Heart right ventricle (tissue), 16 donors: ENCODE measurements at regions of chrX and their contacts with region 1.

Region 1: DNA sequence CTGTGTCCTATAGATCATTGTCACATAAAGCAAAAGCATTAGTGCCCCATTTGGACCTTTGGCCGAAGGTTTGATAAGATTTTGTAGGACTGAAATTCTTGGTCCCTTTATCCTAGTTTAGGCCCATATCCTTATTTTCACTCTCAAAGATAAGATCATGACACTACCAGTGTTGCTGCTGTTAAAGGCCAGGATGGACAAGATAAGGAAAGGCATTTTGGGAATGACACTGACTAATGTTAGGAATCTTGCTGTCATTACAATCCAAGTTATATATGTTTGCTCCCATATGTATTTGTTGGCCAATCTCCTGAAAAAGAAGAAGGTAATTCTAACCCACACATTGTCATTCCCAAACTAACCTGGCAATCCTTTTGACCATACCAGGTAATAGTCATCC is 101.3 kb upstream of the VAMP7 start:
- DNase-seq: no peak
- ATAC-seq: no peak
- H3K4me3 ChIP-seq: no peak overlapping the region
- H3K27ac ChIP-seq: no peak overlapping the region
- H3K4me1 ChIP-seq: no peaks in the 10 kb centered on the region
- H3K27me3 ChIP-seq: no peaks in the 10 kb centered on the region
- CTCF ChIP-seq: no peak

Region 2: DNA sequence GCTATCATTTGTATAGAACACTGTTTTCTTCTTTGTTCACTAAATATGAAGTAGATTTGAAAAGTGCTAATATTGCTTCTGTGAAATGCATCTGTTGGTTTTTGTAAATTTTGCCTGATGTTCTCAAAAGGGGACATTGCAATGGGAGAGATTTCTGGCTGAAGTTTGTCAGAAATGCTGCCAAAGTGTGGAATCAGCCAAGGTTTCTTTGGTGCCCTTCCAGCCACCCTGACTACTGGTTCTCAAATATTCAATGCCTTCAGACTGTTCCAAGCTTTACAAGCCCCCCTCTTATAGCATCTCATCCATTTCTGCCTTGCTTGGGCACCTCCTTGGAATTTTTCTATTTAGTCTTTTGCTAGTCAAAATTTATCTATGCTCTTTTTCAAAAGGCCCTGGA is 106.5 kb before region 1 on chrX:
- intact Hi-C with region 1: no loop called
- DNase-seq: no peak
- ATAC-seq: no peak
- H3K4me3 ChIP-seq: no peak overlapping the region
- H3K27ac ChIP-seq: no peak overlapping the region
- H3K4me1 ChIP-seq: no peaks in the 10 kb centered on the region
- H3K27me3 ChIP-seq: no peaks in the 10 kb centered on the region
- CTCF ChIP-seq: no peak

Region 3: GRCh38 chrX:155718972-155719586 is 60.8 kb before region 1 on chrX:
- intact Hi-C with region 1: loop called in 1 of 10 experiments (anchors 10 kb)
- DNase-seq: peak in 1 of 2 donors; percentile 29
- ATAC-seq: peak in 7 of 8 donors; percentile 73 to 98 (median 85)
- H3K4me3 ChIP-seq: peak overlapping the region in 6 of 10 donors; percentile 3 to 46 (median 36)
- H3K27ac ChIP-seq: peak overlapping the region in 8 of 10 donors; percentile 2 to 81 (median 60)
- H3K4me1 ChIP-seq: peaks cover 0 to 8% (median 0%) of the 10 kb centered on the region in 9 donors
- H3K27me3 ChIP-seq: no peaks in the 10 kb centered on the region
- CTCF ChIP-seq: no peak

Region 4: DNA sequence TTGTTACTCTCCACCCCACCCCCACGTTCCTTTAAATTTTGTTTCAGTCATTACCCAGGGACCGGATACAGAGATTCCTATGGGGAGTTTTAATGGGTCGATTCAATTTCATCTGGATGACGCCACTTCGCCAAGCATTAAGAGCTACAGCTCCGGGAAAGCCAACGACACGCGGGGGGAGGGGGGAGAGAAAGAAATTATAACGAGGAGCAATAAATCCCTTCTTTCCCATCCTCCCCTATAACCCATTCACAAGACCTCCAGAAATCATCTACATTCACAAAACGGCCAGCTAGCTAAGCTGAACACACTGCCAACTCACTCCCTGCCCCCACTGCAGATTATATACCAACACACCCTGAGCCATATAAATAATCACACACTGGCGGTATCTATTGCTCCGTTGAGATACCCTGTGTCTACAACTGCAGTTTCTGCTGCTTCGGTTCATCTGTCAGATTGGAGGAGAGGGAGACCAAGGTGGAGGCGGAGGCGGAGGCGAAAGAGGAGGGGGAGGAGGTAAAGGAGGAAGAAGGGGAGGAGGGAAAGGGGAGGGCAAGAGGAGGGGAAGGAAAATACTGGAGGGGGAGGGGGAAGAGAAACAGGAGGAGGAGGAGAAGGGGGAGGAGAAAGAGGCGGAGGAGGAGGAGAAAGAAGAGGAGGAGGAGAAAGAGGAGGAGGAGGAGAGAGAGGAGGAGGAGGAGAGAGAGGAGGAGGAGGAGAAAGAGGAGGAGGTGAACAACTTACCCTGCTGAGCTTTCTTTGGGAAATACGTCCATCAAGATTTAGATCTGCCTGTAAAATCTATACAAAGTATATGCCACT is 12.6 kb before region 1 on chrX:
- intact Hi-C with region 1: loop called in 1 of 10 experiments (anchors 1 kb)
- DNase-seq: peak; percentile 41 to 73
- ATAC-seq: peak; percentile 82 to 96 (median 91)
- H3K4me3 ChIP-seq: peak overlapping the region in 9 of 10 donors; percentile 27 to 59 (median 55)
- H3K27ac ChIP-seq: peak overlapping the region in 9 of 10 donors; percentile 15 to 71 (median 62)
- H3K4me1 ChIP-seq: peaks cover 0 to 11% (median 0%) of the 10 kb centered on the region in 9 donors
- H3K27me3 ChIP-seq: peaks cover 0 to 8% (median 0%) of the 10 kb centered on the region in 7 donors
- CTCF ChIP-seq: no peak

Region 5: DNA sequence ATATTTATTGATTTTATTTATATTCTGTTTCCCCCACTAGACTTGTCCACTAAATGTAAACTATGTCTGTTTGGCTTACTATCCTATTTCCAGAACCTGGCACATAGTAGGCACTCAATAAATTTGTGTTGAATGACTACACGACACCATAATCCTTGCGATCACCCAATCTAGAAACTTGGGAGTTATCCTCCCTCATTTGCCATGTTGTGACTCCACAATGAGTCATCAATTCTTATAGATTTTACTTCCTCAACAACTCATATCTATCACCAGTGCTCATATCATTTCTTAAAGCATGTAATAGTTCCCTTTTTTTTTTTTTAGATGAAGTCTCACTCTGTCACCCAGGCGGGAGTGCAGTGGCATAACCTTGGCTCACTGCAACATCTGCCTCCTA is 61.4 kb after region 1 on chrX:
- intact Hi-C with region 1: loop called in 1 of 10 experiments (anchors 10 kb)
- DNase-seq: no peak
- ATAC-seq: no peak
- H3K4me3 ChIP-seq: no peak overlapping the region
- H3K27ac ChIP-seq: no peak overlapping the region
- H3K4me1 ChIP-seq: no peaks in the 10 kb centered on the region
- H3K27me3 ChIP-seq: no peaks in the 10 kb centered on the region
- CTCF ChIP-seq: no peak